ENCODE measurements at regions of chr17 and their contacts with region 1.

Region 1: DNA sequence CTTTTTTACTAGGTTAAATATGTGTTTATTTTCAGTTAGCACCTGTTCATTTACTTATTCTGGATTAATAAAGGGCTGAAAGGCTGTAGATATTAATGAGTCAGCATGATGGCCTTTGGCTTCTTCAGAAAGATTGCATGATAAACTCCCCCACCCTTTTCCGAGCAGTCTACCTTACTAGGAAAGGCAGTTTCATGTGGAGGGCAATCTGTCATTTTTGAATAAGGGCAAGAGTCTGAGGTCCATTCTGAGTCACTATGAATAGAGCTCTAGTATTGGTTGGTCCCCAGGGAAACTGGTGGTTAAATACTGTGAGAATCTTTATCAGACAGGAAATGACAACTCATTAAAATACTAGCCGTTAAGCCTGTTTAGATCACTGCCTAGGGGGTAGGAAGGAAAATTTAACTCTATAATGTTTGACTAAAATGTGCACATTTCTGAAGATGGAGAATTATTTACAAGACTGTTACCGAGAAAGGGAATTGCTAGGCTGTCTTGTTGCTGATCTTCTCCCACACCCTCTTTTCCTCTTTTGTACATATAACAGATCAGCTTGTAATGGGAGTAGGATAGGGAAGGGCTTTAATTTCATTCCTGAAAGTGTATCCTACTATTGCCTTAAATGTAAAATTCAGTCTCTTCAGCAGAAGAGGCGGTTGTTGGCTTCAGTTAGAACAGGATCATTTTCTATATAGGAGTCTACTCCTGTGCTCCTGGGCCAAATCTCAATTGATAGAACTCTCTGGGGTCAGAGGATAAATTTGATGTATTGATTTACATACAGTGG is 63.3 kb downstream of the TUBD1 start:
- DNase-seq: peak; percentile 98
- H3K4me3 Mint-ChIP-seq: peak overlapping the region; percentile 61
- H3K27ac Mint-ChIP-seq: peak overlapping the region; percentile 94
- H3K4me1 Mint-ChIP-seq: peaks cover 24% of the 10 kb centered on the region
- H3K27me3 Mint-ChIP-seq: no peaks in the 10 kb centered on the region
- CTCF ChIP-seq: no peak

Region 2: DNA sequence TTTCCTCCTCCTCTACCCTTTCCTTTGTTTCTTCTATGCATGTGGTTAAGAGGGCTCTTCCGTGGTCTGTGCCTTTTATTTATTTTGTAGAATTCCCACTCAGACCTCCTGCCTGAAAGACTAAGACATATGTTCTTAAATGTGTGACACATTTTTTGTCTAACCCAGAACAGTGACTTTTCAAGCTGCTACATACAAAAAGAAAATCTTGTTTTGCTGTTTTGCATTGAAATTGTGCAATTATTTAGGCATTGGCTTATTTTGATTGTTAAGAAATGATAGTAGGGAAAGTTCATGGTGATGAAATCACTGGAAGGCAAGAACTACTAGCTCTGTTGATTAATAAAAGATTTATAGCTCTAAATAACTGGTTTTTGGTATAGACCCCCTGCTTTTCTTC is 13.4 kb before region 1 on chr17:
- CTCF ChIA-PET with region 1: interaction called, 6 read pairs
- POLR2A ChIA-PET with region 1: interaction called, 17 read pairs
- intact Hi-C with region 1: no loop called
- DNase-seq: peak; percentile 14
- H3K4me3 Mint-ChIP-seq: no peak overlapping the region
- H3K27ac Mint-ChIP-seq: peak overlapping the region; percentile 57
- H3K4me1 Mint-ChIP-seq: peaks cover 30% of the 10 kb centered on the region
- H3K27me3 Mint-ChIP-seq: no peaks in the 10 kb centered on the region
- CTCF ChIP-seq: no peak

Measured in MCF 10A (cell line).